ENCODE measurements at regions of chr2 and their contacts with region 1.

Region 1: DNA sequence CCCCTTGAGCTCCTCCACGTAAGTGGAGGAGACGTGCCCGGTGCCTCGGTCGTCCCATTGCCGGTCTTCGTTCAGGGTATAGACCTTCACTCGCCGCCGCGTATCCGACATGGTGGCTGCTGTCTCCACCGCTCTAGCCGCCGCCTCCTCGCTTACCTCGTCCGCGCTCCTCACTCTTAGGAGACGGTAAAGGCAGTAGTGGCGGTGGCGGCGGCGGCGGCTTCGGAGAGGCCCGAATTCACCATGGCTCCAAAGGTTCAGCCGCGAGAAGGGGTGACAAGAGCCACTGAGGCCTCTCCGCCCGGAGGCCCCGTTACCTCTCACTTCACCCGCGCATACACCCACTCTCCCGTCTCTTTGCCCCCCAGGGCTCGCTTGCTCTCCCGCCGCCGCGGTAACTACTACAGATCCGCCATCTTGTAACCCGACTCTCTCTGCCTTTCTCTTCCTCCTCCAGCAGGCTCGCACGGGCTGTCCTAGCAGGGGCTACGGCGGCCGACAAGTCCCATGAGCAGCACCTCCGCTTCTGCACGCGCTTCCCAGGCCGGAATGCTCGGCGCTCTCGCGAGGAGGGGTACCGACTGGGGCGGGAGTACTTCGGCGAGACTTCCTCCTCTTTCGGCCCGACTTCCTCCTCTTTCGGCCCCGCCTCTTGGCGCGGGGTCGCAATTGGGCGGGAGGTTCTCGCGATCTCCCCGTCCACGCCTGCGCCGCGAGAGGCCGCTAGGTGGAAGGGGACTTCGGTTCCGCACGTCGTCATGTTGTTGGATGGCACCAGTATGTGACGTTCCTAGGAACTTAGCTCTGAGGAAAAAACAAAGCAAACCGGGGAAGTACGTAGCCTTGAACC is at the start of gene PPP4R3B:
- DNase-seq: peak; percentile 95 to 99 (median 98)
- H3K4me3 ChIP-seq: peak within 1 kb of the TSS; percentile 63 to 100 (median 96)
- H3K27ac ChIP-seq: peak within 1 kb of the TSS; percentile 86 to 100 (median 96)
- H3K27me3 ChIP-seq: no peaks in the 10 kb centered on the region
- CTCF ChIP-seq: peak in 54 of 56 donors; percentile 13 to 75 (median 56)
- total RNA-seq, gene PPP4R3B: 46.1 to 75.8 (median 59.3) TPM

Region 2: DNA sequence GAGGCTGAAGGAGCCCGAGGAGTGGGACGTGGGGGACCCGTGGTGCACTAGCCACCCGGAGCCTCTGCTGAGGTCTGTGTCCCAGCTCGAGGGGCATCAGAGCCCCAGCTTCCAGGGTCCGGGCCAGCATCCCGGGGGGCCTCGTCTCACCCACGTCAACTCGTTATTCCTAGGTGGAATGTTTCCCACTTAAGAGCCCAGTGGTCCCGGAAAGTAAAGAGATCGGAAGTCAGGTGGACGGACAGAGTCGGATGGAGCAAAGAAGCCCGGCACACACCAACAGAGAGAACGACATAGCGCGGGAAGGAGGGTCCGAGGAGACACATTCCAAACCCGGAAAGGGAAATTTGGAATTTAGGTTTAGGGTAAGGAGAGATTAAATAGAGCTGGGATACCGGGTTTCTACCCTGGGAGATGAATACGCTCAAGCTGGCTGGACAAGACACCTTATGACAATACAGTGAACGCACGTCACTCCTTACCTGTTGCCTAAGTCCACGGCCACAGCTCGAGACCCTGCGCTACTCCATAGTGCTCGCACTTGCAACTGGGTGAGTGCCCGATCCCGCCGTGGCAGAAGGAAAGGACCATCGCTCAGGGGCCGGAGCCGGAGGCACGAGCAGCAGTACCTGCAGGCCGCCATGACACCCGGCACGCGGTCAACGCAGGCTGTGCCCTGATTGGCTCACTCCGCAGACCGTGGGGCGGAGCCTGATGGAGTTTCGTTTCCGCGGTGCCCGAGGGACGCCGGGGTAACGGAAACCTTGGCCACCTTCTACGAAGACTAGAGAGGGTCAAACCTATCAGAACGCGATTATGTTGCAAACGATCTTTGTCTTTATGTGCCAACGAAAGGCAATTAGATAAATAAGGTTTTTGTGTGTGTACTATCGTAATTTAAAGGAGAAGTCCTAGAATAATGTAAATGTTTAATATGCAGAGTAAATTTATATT is 76.1 kb after region 1 on chr2 and contains the start of gene PNPT1:
- intact Hi-C with region 1: loop called in 1 of 2 experiments (anchors 5 kb)
- DNase-seq: peak; percentile 92 to 97 (median 94)
- H3K4me3 ChIP-seq: peak within 1 kb of the TSS; percentile 55 to 100 (median 90)
- H3K27ac ChIP-seq: peak within 1 kb of the TSS in 57 of 59 donors; percentile 9 to 89 (median 74)
- H3K27me3 ChIP-seq: no peaks in the 10 kb centered on the region
- CTCF ChIP-seq: peak in 27 of 56 donors; percentile 3 to 51 (median 29)
- total RNA-seq, gene PNPT1: 18.6 to 67.4 (median 37.2) TPM

Region 3: GRCh38 chr2:55703350-55703749 is 86.0 kb after region 1 on chr2:
- intact Hi-C with region 1: loop called in 1 of 2 experiments (anchors 5 kb)
- DNase-seq: no peak
- H3K4me3 ChIP-seq: no peak overlapping the region
- H3K27ac ChIP-seq: no peak overlapping the region
- H3K27me3 ChIP-seq: peaks cover 0 to 3% (median 0%) of the 10 kb centered on the region in 45 donors
- CTCF ChIP-seq: no peak